ENCODE measurements at regions of chr18 and their contacts with region 1.

Region 1: GRCh38 chr18:62131301-62131909 is 55.5 kb downstream of the PIGN start:
- DNase-seq: peak; percentile 7
- ATAC-seq: peak; percentile 87
- H3K4me3 ChIP-seq: no peak overlapping the region
- H3K27ac ChIP-seq: no peak overlapping the region
- H3K4me1 ChIP-seq: no peaks in the 10 kb centered on the region
- H3K27me3 ChIP-seq: no peaks in the 10 kb centered on the region
- CTCF ChIP-seq: peak; percentile 83 to 92 (median 86)
- EP300 ChIP-seq: no peak
- POLR2A ChIP-seq: no peak
- RAD21 ChIP-seq: peak; percentile 99

Region 2: GRCh38 chr18:61322265-61322873 is 809.0 kb before region 1 on chr18:
- CTCF ChIA-PET with region 1: interaction called, 7 read pairs
- POLR2A ChIA-PET with region 1: no interaction called
- RAD21 ChIA-PET with region 1: no interaction called
- SMC1A ChIA-PET with region 1: interaction called, 3 read pairs
- in situ Hi-C with region 1: no loop called
- intact Hi-C with region 1: loop called (anchors 5 kb)
- DNase-seq: no peak
- ATAC-seq: peak; percentile 99
- H3K4me3 ChIP-seq: no peak overlapping the region
- H3K27ac ChIP-seq: no peak overlapping the region
- H3K4me1 ChIP-seq: no peaks in the 10 kb centered on the region
- H3K27me3 ChIP-seq: no peaks in the 10 kb centered on the region
- CTCF ChIP-seq: peak; percentile 84 to 88 (median 87)
- EP300 ChIP-seq: no peak
- POLR2A ChIP-seq: no peak
- RAD21 ChIP-seq: peak; percentile 88

Region 3: DNA sequence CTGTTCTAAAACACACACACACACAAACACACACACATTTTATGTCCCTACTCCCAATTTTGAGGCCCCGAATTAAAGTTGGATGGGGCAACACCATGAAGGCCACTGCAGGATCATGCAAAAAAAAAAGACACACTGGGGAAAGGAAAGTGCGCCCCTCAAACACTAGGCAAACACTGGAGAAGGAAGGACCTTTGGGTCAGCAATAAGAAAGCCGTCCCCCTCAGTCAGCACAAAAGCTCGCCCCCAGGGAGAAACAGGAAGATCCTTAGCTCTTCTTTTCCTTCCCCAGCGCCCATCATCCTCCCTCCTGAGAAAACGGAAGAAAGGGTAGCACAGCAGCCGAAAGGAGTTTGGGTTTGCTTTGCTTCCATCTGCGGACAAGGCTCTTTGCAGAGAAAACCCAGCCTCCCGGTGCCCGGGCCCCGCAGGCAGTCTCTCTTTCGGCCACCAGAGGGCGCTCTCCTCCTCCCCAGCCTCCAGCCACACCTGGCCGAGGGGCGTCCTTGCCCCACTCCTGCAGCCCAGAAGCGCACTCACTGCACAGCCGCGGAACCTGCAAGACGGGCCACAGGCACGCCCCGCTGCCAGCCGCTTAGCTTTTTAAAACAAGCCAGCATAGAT is 549.7 kb before region 1 on chr18:
- CTCF ChIA-PET with region 1: interaction called, 77 read pairs
- POLR2A ChIA-PET with region 1: no interaction called
- RAD21 ChIA-PET with region 1: interaction called, 15 read pairs
- SMC1A ChIA-PET with region 1: interaction called, 12 read pairs
- in situ Hi-C with region 1: loop called (anchors 5 kb)
- intact Hi-C with region 1: loop called (anchors 1 kb)
- DNase-seq: no peak
- ATAC-seq: peak; percentile 99
- H3K4me3 ChIP-seq: no peak overlapping the region
- H3K27ac ChIP-seq: no peak overlapping the region
- H3K4me1 ChIP-seq: no peaks in the 10 kb centered on the region
- H3K27me3 ChIP-seq: no peaks in the 10 kb centered on the region
- CTCF ChIP-seq: peak; percentile 86 to 94 (median 87)
- EP300 ChIP-seq: no peak
- POLR2A ChIP-seq: no peak
- RAD21 ChIP-seq: peak; percentile 47

Region 4: GRCh38 chr18:61719671-61720070 is 411.7 kb before region 1 on chr18:
- CTCF ChIA-PET with region 1: no interaction called
- POLR2A ChIA-PET with region 1: no interaction called
- RAD21 ChIA-PET with region 1: no interaction called
- SMC1A ChIA-PET with region 1: no interaction called
- in situ Hi-C with region 1: no loop called
- intact Hi-C with region 1: no loop called
- DNase-seq: no peak
- ATAC-seq: no peak
- H3K4me3 ChIP-seq: no peak overlapping the region
- H3K27ac ChIP-seq: no peak overlapping the region
- H3K4me1 ChIP-seq: no peaks in the 10 kb centered on the region
- H3K27me3 ChIP-seq: no peaks in the 10 kb centered on the region
- CTCF ChIP-seq: no peak
- EP300 ChIP-seq: no peak
- POLR2A ChIP-seq: no peak
- RAD21 ChIP-seq: no peak

Region 5: GRCh38 chr18:61817086-61817485 is 314.3 kb before region 1 on chr18:
- CTCF ChIA-PET with region 1: no interaction called
- POLR2A ChIA-PET with region 1: no interaction called
- RAD21 ChIA-PET with region 1: no interaction called
- SMC1A ChIA-PET with region 1: no interaction called
- in situ Hi-C with region 1: no loop called
- intact Hi-C with region 1: loop called (anchors 5 kb)
- DNase-seq: no peak
- ATAC-seq: no peak
- H3K4me3 ChIP-seq: no peak overlapping the region
- H3K27ac ChIP-seq: no peak overlapping the region
- H3K4me1 ChIP-seq: no peaks in the 10 kb centered on the region
- H3K27me3 ChIP-seq: no peaks in the 10 kb centered on the region
- CTCF ChIP-seq: no peak
- EP300 ChIP-seq: no peak
- POLR2A ChIP-seq: no peak
- RAD21 ChIP-seq: no peak

Region 6: DNA sequence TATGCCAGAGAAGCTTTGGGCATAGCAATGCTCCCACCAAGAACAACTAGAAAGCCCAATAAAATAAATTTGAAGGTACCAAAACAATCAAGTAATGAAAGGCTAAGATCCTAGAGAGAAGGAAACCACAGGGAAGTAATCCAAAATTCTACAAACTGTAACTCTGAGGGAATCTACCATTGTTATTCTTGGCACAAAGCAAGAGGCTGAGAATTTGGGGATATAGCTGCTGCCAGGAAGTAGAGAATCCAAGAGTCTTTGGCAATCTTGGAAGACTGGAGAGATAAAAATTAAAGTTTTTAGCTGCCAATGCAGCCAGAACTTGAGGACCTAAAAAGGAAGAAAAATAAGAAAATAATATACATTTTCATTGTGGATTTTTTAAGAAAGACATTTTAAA is 13.1 kb before region 1 on chr18:
- CTCF ChIA-PET with region 1: interaction called, 11 read pairs
- POLR2A ChIA-PET with region 1: no interaction called
- RAD21 ChIA-PET with region 1: interaction called, 7 read pairs
- SMC1A ChIA-PET with region 1: interaction called, 14 read pairs
- in situ Hi-C with region 1: no loop called
- intact Hi-C with region 1: no loop called
- DNase-seq: no peak
- ATAC-seq: no peak
- H3K4me3 ChIP-seq: no peak overlapping the region
- H3K27ac ChIP-seq: no peak overlapping the region
- H3K4me1 ChIP-seq: no peaks in the 10 kb centered on the region
- H3K27me3 ChIP-seq: no peaks in the 10 kb centered on the region
- CTCF ChIP-seq: no peak
- EP300 ChIP-seq: no peak
- POLR2A ChIP-seq: no peak
- RAD21 ChIP-seq: no peak

Region 7: DNA sequence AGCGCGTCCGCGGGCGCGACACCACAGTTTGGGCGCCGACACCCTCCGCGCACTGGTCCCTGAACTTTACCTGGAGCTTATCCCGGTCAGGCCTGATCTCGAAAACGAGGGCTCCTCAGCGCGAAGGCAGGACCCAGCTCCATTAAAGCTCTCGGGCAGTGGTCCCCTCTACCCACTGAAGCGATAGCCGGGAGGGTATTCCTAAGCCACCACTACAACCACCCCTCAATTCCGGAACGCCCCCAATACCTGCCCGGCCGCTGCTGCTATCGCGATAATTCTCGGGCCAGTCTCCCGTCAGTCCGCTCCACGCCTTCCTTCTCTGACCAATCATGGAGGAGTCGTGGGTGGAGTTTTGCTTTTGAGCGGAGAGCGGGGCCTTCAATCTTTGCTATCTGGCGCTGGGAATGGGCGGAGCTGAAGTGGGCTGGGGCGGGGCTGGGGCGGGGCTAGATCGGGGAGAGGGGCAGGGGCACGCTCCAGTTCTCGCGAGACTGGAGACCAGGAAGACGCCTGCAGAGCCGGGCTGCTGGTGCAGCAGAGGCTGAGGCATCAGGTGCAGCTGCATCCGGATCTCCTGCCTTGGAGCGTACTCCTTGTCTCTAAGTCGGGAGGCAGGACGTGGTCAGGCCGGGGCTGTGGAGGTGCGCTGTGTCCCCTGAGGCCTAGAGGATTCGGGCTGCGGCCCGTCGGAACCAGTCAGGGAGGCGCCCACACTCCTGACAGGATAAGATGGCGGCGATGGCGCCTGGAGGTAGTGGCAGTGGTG is 55.6 kb after region 1 on chr18 and contains the starts of genes PIGN and RELCH:
- CTCF ChIA-PET with region 1: no interaction called
- POLR2A ChIA-PET with region 1: no interaction called
- RAD21 ChIA-PET with region 1: no interaction called
- SMC1A ChIA-PET with region 1: no interaction called
- in situ Hi-C with region 1: no loop called
- intact Hi-C with region 1: no loop called
- DNase-seq: peak; percentile 92
- ATAC-seq: peak; percentile 90
- H3K4me3 ChIP-seq: peak within 1 kb of the TSS; percentile 99
- H3K27ac ChIP-seq: peak within 1 kb of the TSS; percentile 91
- H3K4me1 ChIP-seq: peaks cover 3% of the 10 kb centered on the region
- H3K27me3 ChIP-seq: no peaks in the 10 kb centered on the region
- CTCF ChIP-seq: no peak
- EP300 ChIP-seq: no peak
- POLR2A ChIP-seq: peak; percentile 98
- RAD21 ChIP-seq: no peak
- polyA plus RNA-seq, gene PIGN: 6.9 to 12.3 TPM
- polyA plus RNA-seq, gene RELCH: 3.1 to 3.4 TPM

Measured in GM12878 (cell line).